WTC11 (cell line): ENCODE measurements at regions of chr7 and their contacts with region 1.

Region 1: DNA sequence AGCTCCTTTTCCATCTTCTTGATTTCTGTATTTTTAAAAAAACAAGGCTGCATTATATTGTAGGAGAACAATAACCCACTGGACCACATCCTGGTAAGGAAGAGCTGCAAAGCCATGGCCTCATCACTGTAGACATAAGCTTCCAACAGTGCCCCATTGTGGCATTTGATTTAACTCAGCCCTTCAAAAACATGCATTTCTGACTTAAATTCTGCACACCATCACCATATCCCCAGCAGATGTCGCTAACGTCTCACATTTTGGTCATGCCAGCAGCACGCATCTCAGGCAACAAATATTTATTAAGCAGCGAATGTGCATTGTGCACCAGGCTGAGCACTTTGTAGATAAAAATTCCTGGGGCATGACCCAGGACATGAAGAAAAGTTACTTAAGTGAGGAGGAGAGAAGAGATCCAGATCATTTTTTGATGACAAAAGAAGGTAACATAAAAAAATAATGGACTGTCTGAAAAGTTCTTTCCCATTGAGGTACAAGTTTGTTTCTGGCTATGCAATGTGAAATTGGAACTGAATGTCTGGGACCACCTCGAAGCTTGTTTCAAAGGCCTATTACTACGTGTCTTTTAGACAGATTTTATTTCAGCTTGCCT is 164.6 kb upstream of the CDCA7L start:
- DNase-seq: peak; percentile 65
- ATAC-seq: peak; percentile 76
- H3K4me3 Mint-ChIP-seq: no peak overlapping the region
- H3K27ac Mint-ChIP-seq: no peak overlapping the region
- H3K4me1 Mint-ChIP-seq: peaks cover 3% of the 10 kb centered on the region; the same call in 1 of the 2 replicates
- H3K27me3 Mint-ChIP-seq: no peaks in the 10 kb centered on the region
- CTCF ChIP-seq: peak; percentile 76

Region 2: DNA sequence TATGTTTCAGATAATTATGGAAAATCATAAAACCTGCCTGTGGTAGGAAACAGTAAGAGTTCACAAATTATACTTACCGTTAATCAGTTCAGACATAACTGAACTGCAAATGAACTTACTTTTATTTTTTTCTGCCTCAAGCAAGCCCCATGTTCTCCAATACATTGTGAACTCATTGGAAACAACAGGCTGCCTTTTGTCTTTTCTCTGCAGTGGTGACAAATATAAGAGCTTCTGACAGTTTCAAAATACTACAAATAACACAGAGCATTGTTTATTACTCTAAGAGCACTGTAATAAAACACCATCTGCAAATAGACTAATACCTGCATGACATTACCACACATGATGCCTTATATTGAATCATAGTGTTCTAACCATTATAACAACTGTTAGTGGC is 70.7 kb before region 1 on chr7:
- CTCF ChIA-PET with region 1: no interaction called
- POLR2A ChIA-PET with region 1: no interaction called
- DNase-seq: no peak
- ATAC-seq: no peak
- H3K4me3 Mint-ChIP-seq: no peak overlapping the region
- H3K27ac Mint-ChIP-seq: no peak overlapping the region
- H3K4me1 Mint-ChIP-seq: no peaks in the 10 kb centered on the region
- H3K27me3 Mint-ChIP-seq: no peaks in the 10 kb centered on the region
- CTCF ChIP-seq: no peak

Region 3: DNA sequence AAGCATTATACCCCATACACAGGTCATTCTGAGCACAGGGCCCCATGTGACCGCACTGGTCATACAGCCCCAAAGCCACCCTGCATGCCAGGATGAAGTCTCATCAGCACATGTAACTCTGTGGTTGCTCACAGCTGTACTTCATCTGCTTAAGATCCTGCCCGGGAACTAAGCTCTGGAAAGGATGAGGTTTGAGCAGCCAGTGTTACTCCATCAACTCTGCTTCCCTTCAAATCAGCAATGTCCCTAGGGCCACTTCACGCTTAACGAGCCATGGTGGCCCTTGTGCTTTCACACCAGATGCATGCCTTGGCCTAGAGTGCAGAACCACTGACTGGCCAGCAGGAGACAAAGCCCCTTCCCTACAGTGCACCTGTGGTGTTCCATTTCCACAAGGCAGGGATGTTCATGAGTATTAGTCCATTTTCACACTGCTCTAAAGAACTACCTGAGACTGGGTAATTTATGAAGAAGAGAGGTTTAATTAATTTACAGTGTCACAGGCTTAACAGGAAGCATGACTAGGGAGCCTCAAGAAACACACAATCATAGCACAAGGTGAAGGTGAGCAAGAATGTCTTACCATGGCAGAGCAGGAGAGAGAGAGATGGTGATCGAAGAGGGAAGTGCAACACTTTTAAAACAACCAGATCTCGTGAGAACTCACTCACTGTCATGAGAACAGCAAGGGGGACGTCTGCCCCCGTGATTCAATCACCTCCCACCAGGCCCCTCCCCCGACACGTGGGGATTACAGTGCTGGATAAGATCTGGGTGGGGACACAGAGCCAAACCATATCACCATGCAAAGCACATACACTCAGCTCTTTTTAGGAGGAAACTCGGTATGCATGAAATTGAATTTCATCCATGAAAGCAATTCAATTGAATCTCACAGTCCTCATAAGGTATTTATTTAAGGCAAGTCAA is 15.7 kb before region 1 on chr7:
- CTCF ChIA-PET with region 1: interaction called, 15 read pairs
- POLR2A ChIA-PET with region 1: no interaction called
- DNase-seq: no peak
- ATAC-seq: peak; percentile 76
- H3K4me3 Mint-ChIP-seq: no peak overlapping the region
- H3K27ac Mint-ChIP-seq: no peak overlapping the region
- H3K4me1 Mint-ChIP-seq: peaks cover 24% of the 10 kb centered on the region
- H3K27me3 Mint-ChIP-seq: no peaks in the 10 kb centered on the region
- CTCF ChIP-seq: no peak

Region 4: DNA sequence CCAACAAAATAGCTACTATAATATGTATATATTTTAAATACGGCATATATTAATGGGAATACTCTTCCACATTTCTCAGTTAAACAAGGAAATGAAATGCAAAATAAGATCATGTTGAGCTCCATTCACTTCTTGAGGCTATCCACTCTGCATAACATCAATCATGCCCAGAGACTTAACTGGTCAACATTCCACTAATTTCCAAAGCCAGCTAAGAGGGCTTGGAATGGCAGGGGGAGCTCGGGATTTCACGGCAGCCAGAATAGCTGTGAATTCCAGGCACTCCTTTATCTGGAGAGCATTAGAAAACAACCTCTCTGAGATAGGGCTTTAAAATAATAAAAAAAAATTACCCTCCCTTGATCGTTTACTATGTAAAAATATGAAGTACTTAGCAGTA is 30.2 kb after region 1 on chr7:
- CTCF ChIA-PET with region 1: interaction called, 24 read pairs
- POLR2A ChIA-PET with region 1: no interaction called
- DNase-seq: no peak
- ATAC-seq: peak; percentile 75
- H3K4me3 Mint-ChIP-seq: no peak overlapping the region
- H3K27ac Mint-ChIP-seq: peak overlapping the region; percentile 73; the same call in 1 of the 2 replicates
- H3K4me1 Mint-ChIP-seq: peaks cover 47% of the 10 kb centered on the region
- H3K27me3 Mint-ChIP-seq: no peaks in the 10 kb centered on the region; the same call in 1 of the 2 replicates
- CTCF ChIP-seq: no peak

Region 5: GRCh38 chr7:22193450-22193983 is 83.2 kb after region 1 on chr7:
- CTCF ChIA-PET with region 1: interaction called, 11 read pairs
- POLR2A ChIA-PET with region 1: no interaction called
- DNase-seq: peak; percentile 63
- ATAC-seq: peak; percentile 90
- H3K4me3 Mint-ChIP-seq: peak overlapping the region; percentile 82
- H3K27ac Mint-ChIP-seq: peak overlapping the region; percentile 40; the same call in 1 of the 2 replicates
- H3K4me1 Mint-ChIP-seq: peaks cover 70% of the 10 kb centered on the region
- H3K27me3 Mint-ChIP-seq: peaks cover 44% of the 10 kb centered on the region
- CTCF ChIP-seq: no peak

Region 6: GRCh38 chr7:22295402-22296264 is 185.3 kb after region 1 on chr7:
- CTCF ChIA-PET with region 1: interaction called, 15 read pairs
- POLR2A ChIA-PET with region 1: no interaction called
- DNase-seq: no peak
- ATAC-seq: peak; percentile 47; the same call in 1 of the 2 replicates
- H3K4me3 Mint-ChIP-seq: no peak overlapping the region
- H3K27ac Mint-ChIP-seq: peak overlapping the region; percentile 48; the same call in 1 of the 2 replicates
- H3K4me1 Mint-ChIP-seq: peaks cover 3% of the 10 kb centered on the region; the same call in 1 of the 2 replicates
- H3K27me3 Mint-ChIP-seq: no peaks in the 10 kb centered on the region
- CTCF ChIP-seq: no peak

Region 7: DNA sequence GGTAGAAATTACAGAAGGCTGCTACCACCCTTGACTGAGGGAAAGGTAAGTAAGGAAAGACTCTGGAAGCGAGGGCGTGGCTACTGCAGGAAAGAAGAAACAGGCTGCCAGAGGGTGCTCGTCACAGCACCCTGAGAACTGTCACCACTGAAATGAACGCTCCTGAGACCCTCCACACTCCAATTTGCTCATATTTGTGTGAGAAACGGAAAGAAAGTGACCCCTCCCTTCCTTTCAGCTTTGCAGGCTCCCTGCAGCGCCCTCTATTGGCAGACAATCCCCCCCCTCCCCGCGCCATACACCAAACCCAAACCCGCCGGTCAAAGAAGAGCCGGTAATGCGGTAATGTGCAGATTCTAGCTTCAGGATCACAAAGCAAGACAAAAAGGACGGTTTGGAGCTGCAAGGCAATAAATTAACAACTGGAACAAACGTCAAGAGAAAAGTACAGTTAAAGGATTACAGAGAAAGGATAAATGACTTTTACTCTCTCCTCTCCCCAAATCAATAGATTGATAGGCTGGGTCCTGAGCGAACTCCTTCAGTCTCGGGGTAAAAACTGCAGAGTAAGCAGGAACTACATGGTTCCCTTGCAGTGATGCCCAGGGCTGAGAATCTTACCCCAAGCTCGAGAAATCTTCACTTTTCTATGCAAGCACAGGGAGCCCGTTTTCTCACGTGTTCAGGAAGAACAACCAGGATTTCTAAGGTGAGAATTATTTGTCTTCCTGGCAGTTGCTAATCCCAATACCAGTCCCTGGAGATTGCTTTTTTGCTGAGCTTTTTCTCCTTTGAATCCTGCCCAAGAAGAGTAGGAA is 342.0 kb after region 1 on chr7:
- CTCF ChIA-PET with region 1: interaction called, 20 read pairs
- POLR2A ChIA-PET with region 1: no interaction called
- DNase-seq: peak; percentile 86
- ATAC-seq: peak; percentile 93
- H3K4me3 Mint-ChIP-seq: peak overlapping the region; percentile 59
- H3K27ac Mint-ChIP-seq: no peak overlapping the region
- H3K4me1 Mint-ChIP-seq: peaks cover 19% of the 10 kb centered on the region
- H3K27me3 Mint-ChIP-seq: no peaks in the 10 kb centered on the region
- CTCF ChIP-seq: peak; percentile 79

Region 8: GRCh38 chr7:22499044-22499443 is 388.7 kb after region 1 on chr7:
- CTCF ChIA-PET with region 1: interaction called, 17 read pairs
- POLR2A ChIA-PET with region 1: no interaction called
- DNase-seq: no peak
- ATAC-seq: no peak
- H3K4me3 Mint-ChIP-seq: peak overlapping the region; percentile 54; the same call in 1 of the 2 replicates
- H3K27ac Mint-ChIP-seq: no peak overlapping the region
- H3K4me1 Mint-ChIP-seq: peaks cover 18% of the 10 kb centered on the region
- H3K27me3 Mint-ChIP-seq: peaks cover 19% of the 10 kb centered on the region
- CTCF ChIP-seq: no peak